ENCODE measurements at regions of chr6 and their contacts with region 1.

Region 1: GRCh38 chr6:109595998-109596397 is 95.0 kb downstream of the AK9 start:
- DNase-seq: peak; percentile 27
- H3K4me3 Mint-ChIP-seq: no peak overlapping the region
- H3K27ac Mint-ChIP-seq: no peak overlapping the region
- H3K4me1 Mint-ChIP-seq: no peaks in the 10 kb centered on the region
- H3K27me3 Mint-ChIP-seq: peaks cover 7% of the 10 kb centered on the region
- CTCF ChIP-seq: peak; percentile 45

Region 2: GRCh38 chr6:109623288-109623687 is 27.3 kb after region 1 on chr6:
- CTCF ChIA-PET with region 1: no interaction called
- intact Hi-C with region 1: no loop called
- DNase-seq: no peak
- H3K4me3 Mint-ChIP-seq: no peak overlapping the region
- H3K27ac Mint-ChIP-seq: no peak overlapping the region
- H3K4me1 Mint-ChIP-seq: no peaks in the 10 kb centered on the region
- H3K27me3 Mint-ChIP-seq: no peaks in the 10 kb centered on the region
- CTCF ChIP-seq: no peak

Region 3: DNA sequence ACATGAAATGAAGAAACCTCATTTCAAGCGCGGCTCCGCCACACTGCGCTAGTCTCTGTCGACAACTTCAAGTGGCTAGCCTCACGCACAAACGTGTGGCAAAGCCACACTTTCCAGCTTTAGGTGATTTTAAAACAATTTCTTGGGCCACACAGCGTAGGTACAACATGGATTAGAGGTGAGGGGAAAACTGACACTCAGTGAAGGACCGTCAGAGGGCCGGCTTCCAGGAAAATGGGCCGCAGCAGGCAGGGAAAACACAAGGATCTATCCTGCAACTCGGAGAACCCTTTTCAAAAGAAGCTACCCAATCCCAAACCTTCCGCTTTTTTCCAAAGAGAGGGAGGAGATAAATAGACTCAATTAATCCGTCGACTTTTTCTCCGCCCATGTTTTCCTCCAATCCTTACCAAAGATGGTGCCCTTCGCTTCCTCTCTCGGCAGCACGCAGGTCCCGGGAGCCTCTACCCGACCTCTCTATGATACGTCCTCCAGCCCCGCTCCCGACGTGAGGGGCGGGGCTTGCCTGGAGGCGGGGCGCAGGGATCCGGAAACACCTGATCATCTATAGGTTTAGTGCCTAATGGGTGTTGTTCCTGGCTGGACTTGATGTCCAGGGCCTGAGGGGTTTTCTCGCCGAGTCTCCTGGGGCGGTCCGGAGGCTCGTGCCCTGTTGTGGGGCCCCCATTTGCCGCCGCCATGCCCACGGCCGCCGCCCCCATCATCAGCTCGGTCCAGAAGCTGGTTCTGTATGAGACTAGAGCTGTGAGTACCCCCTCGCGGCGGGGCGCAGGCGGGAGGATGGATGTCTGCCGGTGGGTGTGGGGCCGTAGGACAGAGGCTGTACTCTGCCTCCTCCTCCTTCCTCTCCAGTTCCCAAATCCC is 95.0 kb after region 1 on chr6 and contains the starts of genes AK9 and FIG4:
- CTCF ChIA-PET with region 1: interaction called, 3 read pairs
- intact Hi-C with region 1: loop called (anchors 5 kb)
- DNase-seq: peak; percentile 94
- H3K4me3 Mint-ChIP-seq: peak within 1 kb of the TSS; percentile 77
- H3K27ac Mint-ChIP-seq: peak within 1 kb of the TSS; percentile 73
- H3K4me1 Mint-ChIP-seq: peaks cover 18% of the 10 kb centered on the region
- H3K27me3 Mint-ChIP-seq: no peaks in the 10 kb centered on the region
- CTCF ChIP-seq: no peak
- total RNA-seq, gene AK9: 5.6 and 7.6 TPM in 2 replicates
- total RNA-seq, gene FIG4: 11.4 and 14.7 TPM in 2 replicates

Region 4: DNA sequence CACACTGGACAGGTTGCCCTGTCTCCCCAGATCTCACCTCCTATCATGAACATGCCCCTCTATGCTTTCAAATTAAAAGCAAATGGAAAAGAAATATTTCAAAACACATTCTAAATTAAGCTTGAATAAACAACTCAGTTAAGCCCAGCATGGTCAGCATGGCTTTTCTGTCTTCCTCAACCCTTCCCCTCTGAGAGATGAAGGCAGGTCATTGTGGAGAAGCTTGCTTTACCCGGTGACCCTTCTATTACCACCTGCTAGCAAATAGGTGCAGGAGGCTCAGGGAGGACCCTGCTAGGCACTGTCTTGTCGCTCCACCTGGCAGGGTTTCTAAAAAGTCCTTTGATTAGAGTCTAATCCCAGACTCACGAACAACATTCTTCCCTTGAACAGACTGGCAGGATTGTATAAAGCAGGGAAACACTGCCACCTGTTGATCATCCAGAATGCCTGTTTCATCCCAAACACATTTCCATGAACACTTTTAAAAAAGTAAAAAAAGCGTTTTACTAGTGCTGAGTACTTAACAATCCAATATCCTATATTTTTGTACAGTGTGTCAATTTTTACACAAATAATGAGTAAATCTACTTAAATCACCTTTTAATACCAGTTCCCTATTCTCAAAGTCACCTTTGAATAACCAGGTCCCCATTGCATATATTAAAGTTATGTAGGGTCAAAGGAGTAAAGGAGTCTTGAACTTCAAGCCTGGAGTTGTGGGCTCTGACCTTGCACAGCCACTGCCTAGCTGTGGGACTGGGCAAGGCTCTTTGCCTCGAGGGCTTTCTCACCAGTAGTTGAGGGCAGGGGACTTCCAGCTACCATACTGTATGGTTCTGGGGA is 457.6 kb after region 1 on chr6:
- CTCF ChIA-PET with region 1: no interaction called
- intact Hi-C with region 1: loop called (anchors 5 kb)
- DNase-seq: peak; percentile 44
- H3K4me3 Mint-ChIP-seq: no peak overlapping the region
- H3K27ac Mint-ChIP-seq: no peak overlapping the region
- H3K4me1 Mint-ChIP-seq: no peaks in the 10 kb centered on the region
- H3K27me3 Mint-ChIP-seq: peaks cover 17% of the 10 kb centered on the region
- CTCF ChIP-seq: no peak